Dendritic cell treated with granulocyte-macrophage colony-stimulating factor and Interleukin-4, amounts not matched to agents 40 ng/mL and 50 ng/mL, for 4 days (primary cell): ENCODE measurements at regions of chr2 and their contacts with region 1.

Region 1: DNA sequence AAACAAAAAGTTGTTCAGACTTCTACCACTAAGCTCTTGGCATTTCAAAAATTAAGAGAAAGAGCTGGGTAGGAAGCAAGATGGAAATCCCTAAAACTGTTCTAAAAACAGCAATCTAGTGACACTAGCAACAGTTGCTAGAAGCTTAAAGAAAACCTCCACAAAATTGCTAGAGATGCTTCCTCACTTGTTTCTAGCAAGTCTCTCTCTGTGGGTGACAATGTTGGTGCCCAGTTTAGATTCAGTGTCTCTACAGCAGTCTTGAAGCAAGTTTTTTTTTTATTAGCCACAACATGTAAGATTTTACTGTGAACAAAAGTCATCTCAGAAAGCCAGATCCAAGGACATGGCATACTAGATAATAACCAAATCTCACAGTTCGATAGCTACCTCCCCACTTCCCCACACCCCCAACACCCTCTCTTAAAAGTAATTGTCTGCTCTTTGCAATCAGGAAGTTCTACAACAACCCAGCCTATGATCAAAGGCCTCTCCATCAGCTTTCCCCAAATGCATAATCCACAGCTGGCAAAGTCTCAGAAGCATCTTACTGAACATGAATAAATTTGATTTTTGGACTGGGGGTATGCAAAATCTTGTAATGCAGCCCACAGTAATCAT is 70.0 kb downstream of the ANKRD44 start:
- H3K4me3 Mint-ChIP-seq: no peak overlapping the region
- H3K27ac Mint-ChIP-seq: peak overlapping the region; percentile 77
- H3K4me1 Mint-ChIP-seq: peaks cover 68% of the 10 kb centered on the region
- H3K27me3 Mint-ChIP-seq: no peaks in the 10 kb centered on the region

Region 2: GRCh38 chr2:197198890-197199289 is 41.6 kb before region 1 on chr2:
- intact Hi-C with region 1: loop called (anchors 5 kb)
- H3K4me3 Mint-ChIP-seq: peak overlapping the region; percentile 62
- H3K27ac Mint-ChIP-seq: peak overlapping the region; percentile 65
- H3K4me1 Mint-ChIP-seq: peaks cover 65% of the 10 kb centered on the region
- H3K27me3 Mint-ChIP-seq: no peaks in the 10 kb centered on the region